ENCODE measurements at regions of chr14 and their contacts with region 1.

Region 1: DNA sequence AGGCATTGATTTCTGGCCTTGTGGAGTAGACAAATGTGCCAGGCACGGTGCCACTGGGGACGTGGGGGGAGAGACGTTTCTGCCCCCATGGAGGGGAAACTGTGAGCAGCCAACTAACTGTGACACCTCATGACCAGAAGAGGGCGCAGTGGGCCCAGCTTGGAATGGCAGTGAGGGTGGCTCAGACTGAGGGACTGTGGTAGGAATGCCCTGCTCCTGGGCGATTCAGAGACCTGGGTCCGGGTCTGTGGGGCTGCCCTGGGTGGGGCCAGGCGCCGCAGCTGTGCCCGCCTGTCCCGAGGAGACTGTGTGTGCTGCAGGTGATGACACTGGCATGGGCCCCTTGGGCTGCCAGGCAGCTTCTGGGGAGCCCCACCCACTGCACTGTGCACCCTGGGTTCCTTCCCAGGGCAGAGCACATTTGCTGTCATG is 60.6 kb downstream of the SLC25A47 start:
- DNase-seq: no peak
- H3K4me3 ChIP-seq: no peak overlapping the region
- H3K27ac ChIP-seq: no peak overlapping the region
- H3K27me3 ChIP-seq: no peaks in the 10 kb centered on the region
- CTCF ChIP-seq: peak; percentile 84

Region 2: GRCh38 chr14:100400115-100400514 is 16.4 kb after region 1 on chr14:
- CTCF ChIA-PET with region 1: interaction called, 36 read pairs
- POLR2A ChIA-PET with region 1: no interaction called
- DNase-seq: no peak
- H3K4me3 ChIP-seq: no peak overlapping the region
- H3K27ac ChIP-seq: no peak overlapping the region
- H3K27me3 ChIP-seq: no peaks in the 10 kb centered on the region
- CTCF ChIP-seq: no peak

Region 3: GRCh38 chr14:100440187-100440631 is 56.5 kb after region 1 on chr14:
- CTCF ChIA-PET with region 1: interaction called, 10 read pairs
- POLR2A ChIA-PET with region 1: no interaction called
- DNase-seq: peak; percentile 15
- H3K4me3 ChIP-seq: no peak overlapping the region
- H3K27ac ChIP-seq: peak overlapping the region; percentile 39
- H3K27me3 ChIP-seq: no peaks in the 10 kb centered on the region
- CTCF ChIP-seq: peak; percentile 62

Region 4: DNA sequence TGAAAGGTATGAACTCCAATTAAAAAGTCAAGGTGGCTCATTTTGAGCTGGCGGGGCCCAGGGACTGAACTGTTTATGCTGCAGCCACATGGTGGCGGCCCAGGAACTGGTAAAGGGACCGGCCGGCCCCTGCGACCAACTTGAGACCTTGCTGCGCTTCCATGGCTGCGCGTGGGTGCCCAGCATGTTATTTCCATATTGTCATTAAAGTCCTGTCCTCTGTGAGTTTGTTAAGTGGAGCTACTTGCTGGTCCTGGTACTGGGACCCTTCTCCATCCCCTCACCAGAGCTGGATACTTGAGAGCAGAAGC is 141.1 kb after region 1 on chr14:
- CTCF ChIA-PET with region 1: interaction called, 10 read pairs
- POLR2A ChIA-PET with region 1: no interaction called
- DNase-seq: no peak
- H3K4me3 ChIP-seq: no peak overlapping the region
- H3K27ac ChIP-seq: no peak overlapping the region
- H3K27me3 ChIP-seq: no peaks in the 10 kb centered on the region
- CTCF ChIP-seq: peak; percentile 42

Region 5: GRCh38 chr14:100654814-100655740 is 271.3 kb after region 1 on chr14:
- CTCF ChIA-PET with region 1: interaction called, 49 read pairs
- POLR2A ChIA-PET with region 1: no interaction called
- DNase-seq: no peak
- H3K4me3 ChIP-seq: no peak overlapping the region
- H3K27ac ChIP-seq: no peak overlapping the region
- H3K27me3 ChIP-seq: peaks cover 30% of the 10 kb centered on the region
- CTCF ChIP-seq: peak; percentile 50

Region 6: GRCh38 chr14:101628471-101628966 is 1244.8 kb after region 1 on chr14:
- CTCF ChIA-PET with region 1: interaction called, 12 read pairs
- POLR2A ChIA-PET with region 1: no interaction called
- DNase-seq: no peak
- H3K4me3 ChIP-seq: peak overlapping the region; percentile 50
- H3K27ac ChIP-seq: no peak overlapping the region
- H3K27me3 ChIP-seq: peaks cover 11% of the 10 kb centered on the region
- CTCF ChIP-seq: peak; percentile 77

Measured in AG04450 (cell line).